ENCODE measurements at regions of chr2 and their contacts with region 1.

Region 1: DNA sequence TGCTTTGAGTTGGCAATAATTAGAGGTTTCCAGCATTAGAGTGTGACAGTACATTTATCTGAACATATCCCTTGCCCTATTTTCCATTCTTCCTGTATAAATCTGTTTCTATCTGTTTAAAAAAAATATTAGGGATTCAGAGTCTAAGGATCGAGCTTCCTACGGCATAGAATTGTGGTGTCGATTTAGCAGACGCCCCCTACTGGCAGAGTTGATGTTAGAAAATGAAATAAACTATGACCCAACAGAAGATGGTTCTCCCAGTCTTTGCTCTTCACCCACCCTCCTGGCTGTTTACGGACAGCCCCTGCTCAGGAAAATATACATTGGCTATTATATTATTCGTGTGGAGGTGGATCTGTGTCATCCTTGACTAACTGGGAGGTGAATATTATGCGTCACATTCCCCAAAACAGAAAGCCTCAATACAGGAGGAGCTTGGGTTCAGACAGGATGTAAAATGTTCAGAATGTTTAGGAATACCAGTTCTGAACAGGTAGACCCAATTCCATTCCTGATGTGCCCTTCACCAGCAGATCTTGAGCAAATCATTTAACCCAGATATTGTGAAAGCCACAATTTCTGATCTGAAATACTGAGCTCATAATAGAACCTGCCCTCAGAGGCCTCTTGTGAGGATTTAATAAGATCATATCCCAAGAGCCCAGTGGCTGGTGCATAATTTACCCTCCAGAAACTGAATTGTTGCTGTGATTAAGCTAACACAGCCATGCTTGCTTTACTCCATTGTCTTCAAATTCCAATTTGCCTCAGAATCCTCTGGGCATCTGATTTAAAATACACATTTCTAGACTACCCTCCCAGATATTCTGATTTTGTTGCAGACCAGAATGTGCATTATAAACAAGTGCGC is 10.8 kb upstream of the ERMN start:
- DNase-seq: no peak
- ATAC-seq: peak; percentile 74; the same call in 2 of the 3 replicates
- H3K4me3 ChIP-seq: no peak overlapping the region
- H3K27ac ChIP-seq: no peak overlapping the region
- H3K4me1 ChIP-seq: no peaks in the 10 kb centered on the region
- H3K27me3 ChIP-seq: no peaks in the 10 kb centered on the region
- CTCF ChIP-seq: peak; percentile 39 to 69 (median 56)
- EP300 ChIP-seq: no peak
- POLR2A ChIP-seq: no peak
- RAD21 ChIP-seq: peak; percentile 39; the same call in 1 of the 2 replicates

Region 2: GRCh38 chr2:156864325-156864724 is 472.0 kb before region 1 on chr2:
- CTCF ChIA-PET with region 1: no interaction called
- POLR2A ChIA-PET with region 1: no interaction called
- RAD21 ChIA-PET with region 1: no interaction called
- SMC1A ChIA-PET with region 1: no interaction called
- in situ Hi-C with region 1: no loop called
- intact Hi-C with region 1: no loop called
- DNase-seq: no peak
- ATAC-seq: no peak
- H3K4me3 ChIP-seq: no peak overlapping the region
- H3K27ac ChIP-seq: no peak overlapping the region
- H3K4me1 ChIP-seq: no peaks in the 10 kb centered on the region
- H3K27me3 ChIP-seq: no peaks in the 10 kb centered on the region
- CTCF ChIP-seq: no peak
- EP300 ChIP-seq: no peak
- POLR2A ChIP-seq: no peak
- RAD21 ChIP-seq: no peak

Region 3: GRCh38 chr2:157349949-157350515 is 13.7 kb after region 1 on chr2:
- CTCF ChIA-PET with region 1: interaction called, 76 read pairs
- POLR2A ChIA-PET with region 1: interaction called, 3 read pairs
- RAD21 ChIA-PET with region 1: interaction called, 6 read pairs
- SMC1A ChIA-PET with region 1: interaction called, 14 read pairs
- in situ Hi-C with region 1: no loop called
- intact Hi-C with region 1: no loop called
- DNase-seq: no peak
- ATAC-seq: no peak
- H3K4me3 ChIP-seq: no peak overlapping the region
- H3K27ac ChIP-seq: no peak overlapping the region
- H3K4me1 ChIP-seq: no peaks in the 10 kb centered on the region
- H3K27me3 ChIP-seq: no peaks in the 10 kb centered on the region
- CTCF ChIP-seq: no peak
- EP300 ChIP-seq: no peak
- POLR2A ChIP-seq: no peak
- RAD21 ChIP-seq: no peak

Region 4: GRCh38 chr2:157363612-157364101 is 27.3 kb after region 1 on chr2:
- CTCF ChIA-PET with region 1: interaction called, 70 read pairs
- POLR2A ChIA-PET with region 1: no interaction called
- RAD21 ChIA-PET with region 1: no interaction called
- SMC1A ChIA-PET with region 1: interaction called, 21 read pairs
- in situ Hi-C with region 1: no loop called
- intact Hi-C with region 1: no loop called
- DNase-seq: peak; percentile 50
- ATAC-seq: peak; percentile 72
- H3K4me3 ChIP-seq: no peak overlapping the region
- H3K27ac ChIP-seq: peak overlapping the region; percentile 56
- H3K4me1 ChIP-seq: peaks cover 14% of the 10 kb centered on the region
- H3K27me3 ChIP-seq: no peaks in the 10 kb centered on the region
- CTCF ChIP-seq: no peak
- EP300 ChIP-seq: no peak
- POLR2A ChIP-seq: no peak
- RAD21 ChIP-seq: no peak

Region 5: DNA sequence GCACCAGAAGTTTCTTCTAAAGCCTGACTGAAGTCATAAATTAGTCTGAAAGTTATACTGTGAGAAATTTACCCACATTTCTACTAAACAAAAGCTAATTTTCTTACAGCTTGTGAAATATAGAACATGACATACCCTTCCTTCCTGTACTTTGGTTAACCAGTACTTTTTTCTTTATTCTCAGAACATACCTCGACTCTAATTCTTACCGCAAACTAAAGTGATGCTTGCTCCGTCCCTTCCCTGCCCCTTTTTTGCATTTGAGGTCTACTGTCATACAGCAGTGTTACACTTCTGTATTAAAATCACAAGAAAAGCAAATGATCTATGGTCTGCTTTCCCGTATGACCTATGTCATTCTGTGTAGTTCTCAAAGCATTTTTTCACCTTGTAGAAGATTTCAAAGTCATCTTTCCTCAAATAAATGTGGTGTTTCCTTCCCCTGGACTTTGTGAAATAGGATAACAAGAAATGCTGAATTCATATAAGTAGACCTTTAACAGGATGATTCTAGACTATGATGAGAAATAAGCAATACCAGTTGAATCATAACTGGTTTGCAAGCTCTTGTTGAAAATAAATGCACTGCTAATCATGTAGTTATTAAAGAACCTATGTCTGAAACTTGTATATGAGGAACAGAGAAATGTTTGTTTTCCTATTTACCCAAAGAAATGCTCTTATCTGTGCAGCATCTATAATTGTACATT is 77.1 kb after region 1 on chr2:
- CTCF ChIA-PET with region 1: interaction called, 13 read pairs
- POLR2A ChIA-PET with region 1: no interaction called
- RAD21 ChIA-PET with region 1: interaction called, 11 read pairs
- SMC1A ChIA-PET with region 1: interaction called, 3 read pairs
- in situ Hi-C with region 1: no loop called
- intact Hi-C with region 1: no loop called
- DNase-seq: peak; percentile 97
- ATAC-seq: peak; percentile 87
- H3K4me3 ChIP-seq: no peak overlapping the region
- H3K27ac ChIP-seq: peak overlapping the region; percentile 86
- H3K4me1 ChIP-seq: peaks cover 38% of the 10 kb centered on the region
- H3K27me3 ChIP-seq: no peaks in the 10 kb centered on the region
- CTCF ChIP-seq: no peak
- EP300 ChIP-seq: peak; percentile 71 to 74; a peak in 2 of 4 replicates
- POLR2A ChIP-seq: peak; percentile 18; the same call in 1 of the 2 replicates
- RAD21 ChIP-seq: peak; percentile 37

Region 6: GRCh38 chr2:157443795-157444640 is 107.6 kb after region 1 on chr2 and contains the start of gene CYTIP:
- CTCF ChIA-PET with region 1: interaction called, 208 read pairs
- POLR2A ChIA-PET with region 1: interaction called, 5 read pairs
- RAD21 ChIA-PET with region 1: interaction called, 5 read pairs
- SMC1A ChIA-PET with region 1: interaction called, 12 read pairs
- in situ Hi-C with region 1: no loop called
- intact Hi-C with region 1: no loop called
- DNase-seq: peak; percentile 91
- ATAC-seq: peak; percentile 57
- H3K4me3 ChIP-seq: peak within 1 kb of the TSS; percentile 90
- H3K27ac ChIP-seq: peak within 1 kb of the TSS; percentile 98
- H3K4me1 ChIP-seq: peaks cover 8% of the 10 kb centered on the region; the same call in 1 of the 2 replicates
- H3K27me3 ChIP-seq: no peaks in the 10 kb centered on the region
- CTCF ChIP-seq: no peak
- EP300 ChIP-seq: peak; percentile 52 to 67; a peak in 3 of 4 replicates
- POLR2A ChIP-seq: peak; percentile 89
- RAD21 ChIP-seq: 0 out of 2 replicates have a peak, but pooled peaks have one; percentile 21
- polyA plus RNA-seq, gene CYTIP: 71.6 to 75.4 TPM

Region 7: DNA sequence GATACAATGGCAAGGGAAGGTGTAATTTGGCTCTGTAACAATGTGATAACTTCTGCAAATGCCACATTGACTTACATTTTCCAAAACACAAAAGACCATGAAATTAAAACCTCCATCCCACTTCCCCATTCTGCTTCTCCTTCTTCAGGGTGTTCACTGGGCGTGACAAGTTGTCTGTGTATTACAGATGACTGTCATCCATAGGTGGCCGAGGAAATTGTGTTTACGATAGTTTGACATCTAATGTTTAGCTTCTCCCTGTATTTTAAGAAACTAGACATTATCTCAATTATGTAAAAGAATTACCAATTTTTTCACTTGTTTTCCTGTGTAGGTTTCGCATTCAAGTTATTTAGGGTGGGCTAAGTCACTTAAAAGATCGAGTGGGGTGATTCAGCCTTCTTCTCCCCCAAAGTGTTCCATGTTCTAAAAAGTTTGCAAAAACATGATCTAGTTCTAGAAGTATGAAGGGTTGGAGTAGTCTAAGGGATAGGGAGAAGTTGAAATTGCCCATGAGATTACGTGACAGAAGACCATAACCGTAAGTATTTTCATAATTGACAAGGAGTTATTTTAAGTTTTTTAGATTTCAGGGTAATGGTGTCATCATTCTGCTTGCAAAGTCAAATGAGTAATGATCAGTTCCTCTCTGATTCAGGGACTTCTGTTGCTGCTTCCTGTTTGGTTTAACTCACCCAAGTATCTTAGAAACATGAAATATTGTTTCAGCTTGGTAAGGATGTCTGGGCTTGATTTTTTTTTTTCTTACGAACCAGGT is 132.7 kb after region 1 on chr2:
- CTCF ChIA-PET with region 1: interaction called, 14 read pairs
- POLR2A ChIA-PET with region 1: no interaction called
- RAD21 ChIA-PET with region 1: interaction called, 3 read pairs
- SMC1A ChIA-PET with region 1: interaction called, 5 read pairs
- in situ Hi-C with region 1: no loop called
- intact Hi-C with region 1: no loop called
- DNase-seq: peak; percentile 95
- ATAC-seq: peak; percentile 78
- H3K4me3 ChIP-seq: peak overlapping the region; percentile 46; the same call in 1 of the 2 replicates
- H3K27ac ChIP-seq: peak overlapping the region; percentile 98
- H3K4me1 ChIP-seq: peaks cover 38% of the 10 kb centered on the region
- H3K27me3 ChIP-seq: no peaks in the 10 kb centered on the region
- CTCF ChIP-seq: no peak
- EP300 ChIP-seq: peak; percentile 100
- POLR2A ChIP-seq: no peak
- RAD21 ChIP-seq: peak; percentile 22; the same call in 1 of the 2 replicates

Region 8: DNA sequence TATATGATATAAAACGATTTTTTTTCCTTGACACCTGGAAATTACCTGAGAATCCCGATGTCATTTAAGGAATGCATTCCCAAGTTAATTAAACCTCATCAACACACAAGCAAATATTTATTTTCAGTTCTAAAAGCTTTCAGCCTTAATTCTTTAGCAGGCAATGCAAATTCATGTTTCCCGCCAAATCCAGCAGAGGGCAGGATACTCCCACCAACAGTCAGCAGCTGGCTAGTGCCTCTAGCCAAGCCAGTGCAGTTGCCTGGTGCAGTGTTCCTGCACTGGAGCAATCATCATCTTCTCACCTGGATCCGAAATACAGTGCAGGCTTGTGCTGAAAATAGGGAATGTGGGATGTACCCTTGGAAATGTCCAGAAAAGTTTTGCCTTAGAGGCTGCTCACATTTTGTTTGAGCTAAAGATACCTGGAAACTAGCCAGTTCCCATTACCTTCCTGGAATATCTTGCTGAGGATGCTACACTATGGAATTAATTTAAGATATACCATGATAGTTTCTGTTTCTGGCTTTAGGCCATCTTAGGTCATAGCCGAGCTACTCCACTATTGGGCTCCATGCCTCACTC is 155.9 kb after region 1 on chr2:
- CTCF ChIA-PET with region 1: interaction called, 165 read pairs
- POLR2A ChIA-PET with region 1: no interaction called
- RAD21 ChIA-PET with region 1: interaction called, 5 read pairs
- SMC1A ChIA-PET with region 1: interaction called, 165 read pairs
- in situ Hi-C with region 1: no loop called
- intact Hi-C with region 1: no loop called
- DNase-seq: peak; percentile 43
- ATAC-seq: peak; percentile 98
- H3K4me3 ChIP-seq: no peak overlapping the region
- H3K27ac ChIP-seq: no peak overlapping the region
- H3K4me1 ChIP-seq: no peaks in the 10 kb centered on the region
- H3K27me3 ChIP-seq: no peaks in the 10 kb centered on the region
- CTCF ChIP-seq: peak; percentile 79 to 93 (median 82); a peak in 5 of 6 replicates
- EP300 ChIP-seq: no peak
- POLR2A ChIP-seq: no peak
- RAD21 ChIP-seq: peak; percentile 89